ENCODE measurements at regions of chr22 and their contacts with region 1.

Region 1: GRCh38 chr22:37472418-37473006 is 13.7 kb downstream of the MFNG start:
- DNase-seq: peak in 7 of 9 donors; percentile 34 to 54 (median 38)
- ATAC-seq: peak; percentile 60
- H3K4me3 ChIP-seq: no peak overlapping the region
- H3K4me3 Mint-ChIP-seq: no peak overlapping the region
- H3K27ac ChIP-seq: no peak overlapping the region
- H3K27ac Mint-ChIP-seq: peak overlapping the region in 5 of 9 donors; percentile 11 to 87 (median 51)
- H3K4me1 ChIP-seq: no peaks in the 10 kb centered on the region
- H3K4me1 Mint-ChIP-seq: peaks cover 13 to 24% (median 15%) of the 10 kb centered on the region in 7 donors
- H3K27me3 ChIP-seq: no peaks in the 10 kb centered on the region
- H3K27me3 Mint-ChIP-seq: no peaks in the 10 kb centered on the region

Region 2: DNA sequence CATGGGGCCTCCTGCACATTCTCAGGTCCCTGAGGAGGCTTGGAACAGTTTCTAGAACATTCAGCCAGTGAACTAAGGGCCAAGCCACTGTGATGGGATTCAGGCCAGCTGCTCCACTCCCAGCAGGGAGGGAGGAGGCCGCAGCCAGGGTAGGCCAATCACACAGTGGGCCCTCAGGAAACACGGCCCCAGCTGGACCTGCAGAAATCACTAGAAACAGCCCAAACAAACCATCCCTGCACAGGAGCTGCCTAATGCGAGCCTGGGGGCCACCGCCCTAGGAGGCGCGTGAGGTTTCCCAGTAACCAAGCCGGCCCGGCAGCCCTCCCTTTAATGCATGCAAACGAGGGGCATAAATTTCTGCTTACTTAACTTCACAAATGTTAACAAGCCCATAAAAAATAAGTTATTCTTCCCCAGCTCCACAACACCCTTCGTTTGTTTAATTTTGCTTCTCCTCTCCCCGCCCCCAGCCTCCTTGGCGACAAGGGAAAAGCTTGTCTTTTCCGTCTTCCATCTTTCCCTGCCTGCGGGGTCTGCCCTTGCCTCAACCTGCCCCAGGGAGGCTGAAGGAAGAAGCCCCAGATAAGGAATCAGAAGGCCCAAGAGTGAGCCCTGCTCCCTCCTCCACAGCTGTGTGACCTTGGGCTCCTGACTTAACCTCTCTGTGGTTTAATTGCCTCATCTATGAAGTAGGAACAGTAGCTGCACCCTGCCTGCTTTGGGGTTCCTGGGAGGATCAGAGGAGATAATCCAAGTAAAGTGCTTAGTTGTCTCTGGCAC is 70.9 kb before region 1 on chr22:
- CTCF ChIA-PET with region 1: no interaction called
- POLR2A ChIA-PET with region 1: no interaction called
- intact Hi-C with region 1: no loop called
- DNase-seq: no peak
- ATAC-seq: no peak
- H3K4me3 ChIP-seq: no peak overlapping the region
- H3K4me3 Mint-ChIP-seq: no peak overlapping the region
- H3K27ac ChIP-seq: no peak overlapping the region
- H3K27ac Mint-ChIP-seq: no peak overlapping the region
- H3K4me1 ChIP-seq: no peaks in the 10 kb centered on the region
- H3K4me1 Mint-ChIP-seq: no peaks in the 10 kb centered on the region
- H3K27me3 ChIP-seq: no peaks in the 10 kb centered on the region
- H3K27me3 Mint-ChIP-seq: peaks cover 0 to 6% (median 2%) of the 10 kb centered on the region in 5 donors

Region 3: DNA sequence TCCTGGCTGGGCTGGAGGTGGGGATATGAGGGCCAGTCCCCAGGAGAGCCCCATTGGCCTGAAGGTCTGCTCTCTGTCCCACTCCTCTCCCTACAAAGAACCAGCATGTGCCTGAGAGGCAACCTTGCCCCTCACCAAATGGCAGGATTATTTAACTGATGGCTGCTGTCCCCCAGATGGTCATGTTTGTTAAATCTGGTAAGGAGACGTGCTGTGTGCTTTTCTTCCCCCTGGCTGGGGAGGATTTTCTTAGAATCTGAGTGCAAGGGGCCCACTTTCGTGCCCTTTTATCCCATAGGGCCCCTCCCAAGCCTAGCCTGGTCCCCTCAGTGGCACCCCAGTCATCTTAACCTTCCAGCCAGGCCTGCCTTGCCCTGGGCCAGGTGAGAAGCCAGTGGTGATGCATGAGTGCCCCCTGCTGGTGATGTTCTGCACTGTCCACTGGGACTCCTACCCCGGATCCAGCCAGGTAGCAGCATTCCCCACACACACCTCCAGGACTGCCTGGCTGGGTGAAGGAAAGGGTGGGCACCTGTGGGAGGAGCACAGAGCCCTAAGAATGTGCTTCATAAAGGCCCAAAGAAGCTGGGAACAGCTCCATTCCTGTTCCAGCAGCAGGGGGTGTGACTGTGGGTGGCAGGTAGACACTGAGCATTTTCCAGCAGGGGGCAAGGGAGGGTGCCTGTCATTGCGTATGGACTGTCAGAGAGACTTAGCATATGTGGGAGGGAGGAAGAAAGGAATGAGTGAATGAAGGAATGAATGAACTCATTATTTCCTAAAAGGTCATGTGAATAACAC is 15.2 kb before region 1 on chr22:
- CTCF ChIA-PET with region 1: interaction called, 14 read pairs
- POLR2A ChIA-PET with region 1: interaction called, 3 read pairs
- intact Hi-C with region 1: no loop called
- DNase-seq: peak; percentile 66 to 88 (median 77)
- ATAC-seq: peak; percentile 96
- H3K4me3 ChIP-seq: no peak overlapping the region
- H3K4me3 Mint-ChIP-seq: no peak overlapping the region
- H3K27ac ChIP-seq: no peak overlapping the region
- H3K27ac Mint-ChIP-seq: peak overlapping the region in 1 of 9 donors; percentile 51
- H3K4me1 ChIP-seq: no peaks in the 10 kb centered on the region
- H3K4me1 Mint-ChIP-seq: peaks cover 0 to 9% (median 5%) of the 10 kb centered on the region in 7 donors
- H3K27me3 ChIP-seq: no peaks in the 10 kb centered on the region
- H3K27me3 Mint-ChIP-seq: no peaks in the 10 kb centered on the region

Region 4: DNA sequence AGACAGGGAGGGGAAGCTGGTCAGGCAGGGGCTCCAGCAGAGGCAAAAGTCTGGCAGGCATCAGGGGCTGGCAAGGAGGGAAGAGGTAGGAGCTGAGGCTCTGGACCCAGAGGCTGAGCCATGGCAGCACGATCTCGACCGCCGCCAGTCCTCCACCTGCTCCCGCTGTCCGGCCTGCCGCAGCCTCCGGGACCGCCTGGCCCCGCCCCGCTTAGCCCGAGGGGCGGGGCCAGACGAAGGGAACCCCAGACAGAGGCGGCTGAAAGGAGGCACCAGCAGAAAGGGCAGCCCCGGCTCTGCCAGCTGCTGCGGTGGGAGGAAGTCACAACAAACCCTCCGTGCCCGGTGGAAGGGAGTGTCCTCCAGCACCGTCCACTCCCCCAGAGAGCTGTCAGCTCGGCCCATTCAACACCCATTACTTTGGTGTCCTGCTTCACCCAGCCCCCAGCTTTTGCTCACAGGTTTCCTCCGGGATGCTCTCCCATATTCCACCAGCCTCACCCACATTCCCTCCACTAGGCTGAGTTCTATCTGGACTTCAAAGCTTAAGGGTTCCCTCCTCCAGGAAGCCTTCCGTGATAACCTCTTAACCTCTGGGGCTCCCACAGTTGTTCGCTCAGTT is 13.8 kb after region 1 on chr22 and contains the start of gene MFNG:
- CTCF ChIA-PET with region 1: interaction called, 20 read pairs
- POLR2A ChIA-PET with region 1: interaction called, 32 read pairs
- intact Hi-C with region 1: no loop called
- DNase-seq: peak; percentile 57 to 82 (median 61)
- ATAC-seq: peak; percentile 81
- H3K4me3 ChIP-seq: peak within 1 kb of the TSS; percentile 84
- H3K4me3 Mint-ChIP-seq: peak within 1 kb of the TSS; percentile 91 to 99 (median 96)
- H3K27ac ChIP-seq: peak within 1 kb of the TSS; percentile 86
- H3K27ac Mint-ChIP-seq: peak within 1 kb of the TSS; percentile 94 to 99 (median 98)
- H3K4me1 ChIP-seq: peaks cover 25 to 57% of the 10 kb centered on the region in 2 donors
- H3K4me1 Mint-ChIP-seq: peaks cover 53 to 79% (median 68%) of the 10 kb centered on the region in 7 donors
- H3K27me3 ChIP-seq: no peaks in the 10 kb centered on the region
- H3K27me3 Mint-ChIP-seq: no peaks in the 10 kb centered on the region
- total RNA-seq, gene MFNG: 146 to 223 (median 203) TPM

Region 5: GRCh38 chr22:37492428-37493344 is 20.2 kb after region 1 on chr22:
- CTCF ChIA-PET with region 1: interaction called, 45 read pairs
- POLR2A ChIA-PET with region 1: no interaction called
- intact Hi-C with region 1: loop called in 1 of 2 experiments (anchors 1 kb)
- DNase-seq: peak in 8 of 9 donors; percentile 36 to 59 (median 52)
- ATAC-seq: peak; percentile 91
- H3K4me3 ChIP-seq: no peak overlapping the region
- H3K4me3 Mint-ChIP-seq: peak overlapping the region in 3 of 10 donors; percentile 10 to 21 (median 19)
- H3K27ac ChIP-seq: no peak overlapping the region
- H3K27ac Mint-ChIP-seq: peak overlapping the region in 8 of 9 donors; percentile 34 to 84 (median 63)
- H3K4me1 ChIP-seq: peaks cover under 1 to 24% of the 10 kb centered on the region in 2 donors
- H3K4me1 Mint-ChIP-seq: peaks cover 23 to 56% (median 45%) of the 10 kb centered on the region in 7 donors
- H3K27me3 ChIP-seq: no peaks in the 10 kb centered on the region
- H3K27me3 Mint-ChIP-seq: peaks cover 0 to 1% (median 0%) of the 10 kb centered on the region in 5 donors

Region 6: DNA sequence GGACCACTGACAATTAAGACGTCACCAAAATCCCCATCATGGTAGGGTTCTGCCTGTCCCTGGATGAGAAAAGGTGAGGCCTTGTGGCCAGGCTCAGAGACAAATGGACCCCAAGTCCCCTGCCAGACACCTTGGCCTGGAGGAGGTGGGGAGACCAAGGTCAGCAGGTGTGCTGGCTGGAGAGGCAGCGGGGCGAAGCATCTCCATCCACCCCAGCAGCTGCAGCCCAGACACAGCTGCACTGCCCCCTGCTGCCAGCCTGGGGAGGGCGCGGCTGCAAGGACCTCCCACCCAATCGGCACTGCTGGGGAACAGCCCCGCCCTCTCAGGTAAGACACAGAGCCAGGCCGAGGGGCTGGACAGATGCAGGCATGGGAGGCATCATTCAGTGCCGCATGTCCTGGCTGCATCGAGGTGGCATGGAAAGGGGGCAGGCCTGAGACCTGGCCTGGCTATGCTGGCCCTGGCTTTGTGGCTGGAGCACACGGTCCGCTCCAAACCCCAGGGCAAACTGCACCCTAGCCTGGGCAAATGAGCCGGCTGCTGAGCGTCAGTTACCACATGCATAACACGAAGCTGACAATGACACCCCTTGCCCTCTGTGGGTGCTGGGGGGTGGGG is 25.9 kb after region 1 on chr22:
- CTCF ChIA-PET with region 1: interaction called, 45 read pairs
- POLR2A ChIA-PET with region 1: interaction called, 6 read pairs
- intact Hi-C with region 1: loop called in 1 of 2 experiments (anchors 1 kb)
- DNase-seq: peak; percentile 51 to 80 (median 72)
- ATAC-seq: peak; percentile 94
- H3K4me3 ChIP-seq: no peak overlapping the region
- H3K4me3 Mint-ChIP-seq: no peak overlapping the region
- H3K27ac ChIP-seq: no peak overlapping the region
- H3K27ac Mint-ChIP-seq: no peak overlapping the region
- H3K4me1 ChIP-seq: peaks cover 4 to 21% of the 10 kb centered on the region in 2 donors
- H3K4me1 Mint-ChIP-seq: peaks cover 17 to 35% (median 28%) of the 10 kb centered on the region in 7 donors
- H3K27me3 ChIP-seq: no peaks in the 10 kb centered on the region
- H3K27me3 Mint-ChIP-seq: peaks cover 0 to 5% (median 0%) of the 10 kb centered on the region in 5 donors

Region 7: GRCh38 chr22:37505989-37506388 is 33.5 kb after region 1 on chr22:
- CTCF ChIA-PET with region 1: interaction called, 45 read pairs
- POLR2A ChIA-PET with region 1: interaction called, 3 read pairs
- intact Hi-C with region 1: no loop called
- DNase-seq: no peak
- ATAC-seq: no peak
- H3K4me3 ChIP-seq: no peak overlapping the region
- H3K4me3 Mint-ChIP-seq: no peak overlapping the region
- H3K27ac ChIP-seq: no peak overlapping the region
- H3K27ac Mint-ChIP-seq: no peak overlapping the region
- H3K4me1 ChIP-seq: peaks cover 0 to 14% of the 10 kb centered on the region in 2 donors
- H3K4me1 Mint-ChIP-seq: peaks cover 11 to 19% (median 15%) of the 10 kb centered on the region in 7 donors
- H3K27me3 ChIP-seq: no peaks in the 10 kb centered on the region
- H3K27me3 Mint-ChIP-seq: peaks cover 0 to 2% (median 0%) of the 10 kb centered on the region in 5 donors